Gastrocnemius medialis (tissue), 4 donors: ENCODE measurements at regions of chr6 and their contacts with region 1.

Region 1: GRCh38 chr6:121430514-121431460 is 4.7 kb upstream of the GJA1 start:
- DNase-seq: no peak
- ATAC-seq: peak in 1 of 2 donors; percentile 66
- H3K4me3 ChIP-seq: no peak overlapping the region
- H3K27ac ChIP-seq: no peak overlapping the region
- H3K4me1 ChIP-seq: no peaks in the 10 kb centered on the region
- H3K27me3 ChIP-seq: peaks cover 5 to 7% (median 7%) of the 10 kb centered on the region in 3 donors
- CTCF ChIP-seq: peak; percentile 34 to 79 (median 60)
- POLR2A ChIP-seq: no peak

Region 2: DNA sequence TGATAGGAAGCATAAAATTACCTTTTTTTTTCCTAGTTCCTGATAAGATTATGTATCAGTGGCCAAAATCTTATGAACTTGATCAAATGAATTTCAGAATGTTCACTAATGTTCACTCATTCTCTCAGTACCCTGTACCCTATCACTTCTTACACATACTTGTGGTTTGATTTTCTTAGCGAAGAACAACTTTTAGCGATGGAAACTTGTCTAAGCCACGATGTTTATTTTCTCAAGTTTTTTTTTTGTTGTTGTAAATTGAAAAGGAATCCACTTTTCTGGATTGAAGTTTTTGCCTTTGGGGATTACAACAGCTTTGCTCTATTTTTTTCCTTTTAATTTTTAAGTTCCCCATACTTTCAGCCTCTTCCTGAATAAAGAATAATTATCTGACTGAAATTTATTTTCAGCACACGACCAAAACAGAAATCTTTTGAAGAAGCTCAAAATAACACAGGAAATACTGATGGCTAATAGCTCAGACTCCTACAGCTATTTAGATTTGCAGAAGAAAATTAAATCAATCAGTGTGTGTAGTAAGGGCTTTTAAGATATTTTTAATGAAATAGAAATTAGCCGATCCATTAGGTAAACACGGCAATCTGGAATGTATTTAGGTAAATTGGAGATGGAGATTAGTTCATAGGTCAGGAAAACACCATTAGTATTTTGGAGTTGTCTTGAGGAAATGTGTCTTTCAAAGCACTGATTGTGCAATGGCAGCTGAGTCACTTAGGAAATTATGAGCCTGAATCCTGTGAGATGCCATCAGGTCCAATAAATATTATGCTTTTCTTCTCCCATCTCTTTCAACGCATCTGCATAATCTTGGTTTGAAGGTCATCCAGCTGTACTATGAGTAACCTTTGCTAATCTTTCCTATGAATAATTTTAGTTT is 222.2 kb after region 1 on chr6:
- in situ Hi-C with region 1: no loop called
- intact Hi-C with region 1: loop called (anchors 10 kb)
- DNase-seq: peak in 1 of 2 donors; percentile 25
- ATAC-seq: peak; percentile 70 to 75
- H3K4me3 ChIP-seq: no peak overlapping the region
- H3K27ac ChIP-seq: peak overlapping the region; percentile 61 to 72 (median 66)
- H3K4me1 ChIP-seq: peaks cover 0 to 4% of the 10 kb centered on the region in 2 donors
- H3K27me3 ChIP-seq: no peaks in the 10 kb centered on the region
- CTCF ChIP-seq: no peak
- POLR2A ChIP-seq: no peak

Region 3: GRCh38 chr6:121849477-121849876 is 418.7 kb after region 1 on chr6:
- in situ Hi-C with region 1: loop called in 3 of 4 experiments (anchors 5 to 25 kb)
- intact Hi-C with region 1: loop called (anchors 1 kb)
- DNase-seq: peak in 1 of 2 donors; percentile 43
- ATAC-seq: peak; percentile 74 to 81
- H3K4me3 ChIP-seq: no peak overlapping the region
- H3K27ac ChIP-seq: peak overlapping the region in 2 of 4 donors; percentile 1 to 9
- H3K4me1 ChIP-seq: no peaks in the 10 kb centered on the region
- H3K27me3 ChIP-seq: no peaks in the 10 kb centered on the region
- CTCF ChIP-seq: peak; percentile 55 to 70 (median 58)
- POLR2A ChIP-seq: no peak

Region 4: DNA sequence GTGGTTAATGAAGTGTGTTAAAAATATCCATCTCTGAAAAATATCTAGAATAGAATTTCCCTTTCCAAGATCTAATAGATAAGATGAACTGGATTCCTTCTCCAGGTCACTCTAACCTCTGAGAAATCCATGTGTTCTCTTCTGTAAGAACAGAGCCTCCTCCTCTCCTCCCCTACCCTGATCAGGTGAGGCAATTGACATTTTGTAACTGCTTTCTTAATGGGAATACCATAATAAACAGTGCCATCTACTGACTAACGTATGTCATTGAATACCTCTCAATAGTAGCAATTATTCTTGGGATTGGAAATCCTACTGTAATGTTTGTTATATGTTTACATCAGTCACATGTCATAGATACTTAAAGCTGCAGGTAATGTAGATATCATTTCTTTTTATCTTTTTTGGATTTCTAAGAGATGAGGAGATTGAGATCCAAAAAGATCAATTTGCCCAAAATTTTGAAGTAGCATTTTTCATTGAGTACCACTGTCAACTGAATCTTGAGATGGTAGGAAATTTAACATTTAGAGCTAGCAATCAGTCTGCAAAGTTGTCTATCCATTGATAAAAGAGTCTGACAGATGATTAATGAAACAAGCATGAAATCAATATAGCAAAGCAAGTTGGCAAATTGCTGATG is 602.9 kb after region 1 on chr6:
- in situ Hi-C with region 1: loop called (anchors 5 to 10 kb)
- intact Hi-C with region 1: loop called (anchors 1 kb)
- DNase-seq: no peak
- ATAC-seq: peak; percentile 90 to 91
- H3K4me3 ChIP-seq: no peak overlapping the region
- H3K27ac ChIP-seq: no peak overlapping the region
- H3K4me1 ChIP-seq: no peaks in the 10 kb centered on the region
- H3K27me3 ChIP-seq: no peaks in the 10 kb centered on the region
- CTCF ChIP-seq: peak; percentile 38 to 69 (median 63)
- POLR2A ChIP-seq: no peak

Region 5: DNA sequence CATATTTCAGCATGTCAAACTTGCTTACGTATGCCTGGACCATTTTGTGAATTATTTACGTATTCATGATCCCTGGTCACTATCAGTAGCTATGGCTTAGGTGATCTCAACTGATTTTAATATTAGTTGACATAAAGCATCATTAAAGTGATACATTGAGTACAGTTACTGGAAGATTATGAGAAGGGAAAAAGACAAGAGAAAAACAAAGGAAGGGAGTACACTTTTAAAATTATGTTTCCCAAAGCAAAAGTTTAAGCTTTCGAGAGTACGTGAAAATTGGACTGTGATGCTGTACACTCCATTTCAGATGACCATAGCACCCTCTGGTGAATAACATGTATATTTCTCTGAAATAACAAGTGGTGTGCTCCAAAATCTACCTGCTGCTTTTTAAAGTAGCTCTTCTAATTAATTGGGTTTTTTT is 753.6 kb after region 1 on chr6:
- in situ Hi-C with region 1: loop called in 3 of 4 experiments (anchors 5 to 10 kb)
- intact Hi-C with region 1: loop called (anchors 2 kb)
- DNase-seq: no peak
- ATAC-seq: peak in 1 of 2 donors; percentile 49
- H3K4me3 ChIP-seq: peak overlapping the region in 1 of 4 donors; percentile 21
- H3K27ac ChIP-seq: no peak overlapping the region
- H3K4me1 ChIP-seq: peaks cover 0 to 3% of the 10 kb centered on the region in 2 donors
- H3K27me3 ChIP-seq: no peaks in the 10 kb centered on the region
- CTCF ChIP-seq: peak; percentile 14 to 52 (median 40)
- POLR2A ChIP-seq: no peak

Region 6: GRCh38 chr6:122372647-122373046 is 941.9 kb after region 1 on chr6:
- in situ Hi-C with region 1: no loop called
- intact Hi-C with region 1: loop called (anchors 10 kb)
- DNase-seq: no peak
- ATAC-seq: no peak
- H3K4me3 ChIP-seq: no peak overlapping the region
- H3K27ac ChIP-seq: no peak overlapping the region
- H3K4me1 ChIP-seq: no peaks in the 10 kb centered on the region
- H3K27me3 ChIP-seq: no peaks in the 10 kb centered on the region
- CTCF ChIP-seq: no peak
- POLR2A ChIP-seq: no peak